Aorta (tissue), 5 donors: ENCODE measurements at regions of chr4 and their contacts with region 1.

Region 1: DNA sequence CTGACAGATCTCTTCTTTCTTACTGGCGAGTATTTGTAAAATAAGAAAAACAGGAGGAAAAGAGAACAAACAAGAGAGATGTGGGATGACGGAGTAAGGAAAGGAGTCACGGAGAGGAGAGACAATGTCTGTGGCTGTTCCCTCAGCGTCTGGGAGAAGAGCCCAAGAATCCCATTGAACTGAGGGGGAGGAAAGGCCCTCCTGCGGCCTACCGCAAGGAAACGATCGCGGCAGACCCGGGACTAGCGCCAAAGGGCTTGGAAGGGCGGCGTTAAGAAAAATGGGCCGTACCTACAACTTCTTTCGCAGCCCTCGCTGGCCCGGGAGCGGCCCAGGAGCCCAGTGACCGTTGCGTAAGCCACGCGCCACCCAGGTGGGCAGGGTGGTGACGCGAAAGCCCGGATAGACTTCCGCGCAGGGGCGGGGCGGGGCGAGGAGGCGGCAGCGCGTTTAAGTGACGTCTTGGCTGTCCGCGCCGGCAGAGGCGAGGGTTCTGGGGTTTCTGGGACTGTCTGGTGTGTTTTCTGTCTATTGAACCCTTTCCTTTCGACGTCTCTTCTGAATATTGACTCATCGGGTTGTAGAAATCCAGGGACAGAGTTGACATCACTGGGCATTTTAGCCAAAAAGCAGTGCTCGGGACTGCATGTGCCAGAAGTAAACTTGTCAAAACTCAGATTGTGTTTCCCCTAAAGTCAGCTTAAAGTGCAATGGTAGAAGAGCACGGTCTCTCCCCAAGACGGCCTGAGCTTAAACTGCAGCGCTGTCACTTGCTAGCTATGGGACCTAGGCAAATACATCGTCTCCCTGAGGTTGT is at the start of gene SLC9B1:
- DNase-seq: peak; percentile 97 to 99
- ATAC-seq: peak; percentile 99
- H3K4me3 ChIP-seq: peak within 1 kb of the TSS; percentile 30 to 86
- H3K27ac ChIP-seq: peak within 1 kb of the TSS; percentile 84 to 98
- H3K4me1 ChIP-seq: no peaks in the 10 kb centered on the region
- H3K27me3 ChIP-seq: no peaks in the 10 kb centered on the region
- total RNA-seq, gene SLC9B1: 1.6 TPM

Region 2: DNA sequence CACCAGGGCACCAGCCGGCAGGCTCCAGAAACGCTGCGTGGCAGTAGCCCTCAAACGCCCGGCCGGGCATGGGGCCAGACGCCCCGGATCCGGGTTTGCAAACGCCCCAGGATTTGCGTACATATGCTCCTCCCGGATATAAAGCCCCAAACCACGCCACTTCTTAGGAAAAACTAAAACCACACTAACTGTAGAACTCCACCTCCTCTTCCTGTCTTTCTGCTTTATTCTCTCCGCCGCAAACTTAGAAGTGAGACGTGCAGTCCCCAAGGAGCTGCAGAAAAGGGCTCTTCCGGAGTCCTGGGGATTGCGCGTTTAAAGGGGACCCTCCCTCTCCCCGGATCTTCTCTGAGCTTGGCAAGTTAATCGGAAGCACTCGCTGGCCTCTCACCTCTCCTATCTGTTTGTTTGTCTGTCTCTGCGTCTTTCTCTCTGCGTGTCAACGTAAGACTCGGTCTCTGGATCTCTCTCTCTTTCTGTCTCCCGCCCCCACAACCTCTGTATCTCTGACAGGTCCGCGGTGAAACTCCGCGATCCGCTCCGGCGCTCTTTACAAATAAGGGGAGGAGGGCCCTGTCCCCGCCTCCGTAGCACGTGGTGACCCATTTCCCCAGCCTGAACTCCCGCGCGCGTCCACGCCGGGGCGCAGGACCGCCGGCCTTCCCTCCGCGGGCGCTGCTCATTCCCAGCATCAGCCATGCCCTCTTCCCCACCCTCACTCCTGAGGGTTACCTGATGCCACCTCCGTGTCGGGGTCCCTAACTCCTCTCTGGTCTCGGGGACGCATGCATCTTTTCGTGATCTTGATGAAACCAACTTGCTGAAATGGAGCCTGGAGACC is 674.3 kb before region 1 on chr4 and contains the start of gene SLC39A8:
- intact Hi-C with region 1: loop called in 1 of 2 experiments (anchors 10 kb)
- DNase-seq: peak; percentile 92 to 95
- ATAC-seq: peak; percentile 96
- H3K4me3 ChIP-seq: peak within 1 kb of the TSS; percentile 68 to 88
- H3K27ac ChIP-seq: no peak within 1 kb of the TSS
- H3K4me1 ChIP-seq: no peaks in the 10 kb centered on the region
- H3K27me3 ChIP-seq: no peaks in the 10 kb centered on the region
- total RNA-seq, gene SLC39A8: 16.5 to 31.3 TPM

Region 3: GRCh38 chr4:102500696-102501446 is 518.6 kb before region 1 on chr4 and contains the start of gene NFKB1:
- intact Hi-C with region 1: loop called in 1 of 2 experiments (anchors 5 kb)
- DNase-seq: peak; percentile 86
- ATAC-seq: peak; percentile 67
- H3K4me3 ChIP-seq: peak within 1 kb of the TSS; percentile 85 to 90
- H3K27ac ChIP-seq: peak within 1 kb of the TSS; percentile 88 to 97
- H3K4me1 ChIP-seq: peaks cover 3 to 6% of the 10 kb centered on the region in 2 donors
- H3K27me3 ChIP-seq: peaks cover 0 to 2% of the 10 kb centered on the region in 2 donors
- total RNA-seq, gene NFKB1: 39.8 to 48.4 TPM

Region 4: DNA sequence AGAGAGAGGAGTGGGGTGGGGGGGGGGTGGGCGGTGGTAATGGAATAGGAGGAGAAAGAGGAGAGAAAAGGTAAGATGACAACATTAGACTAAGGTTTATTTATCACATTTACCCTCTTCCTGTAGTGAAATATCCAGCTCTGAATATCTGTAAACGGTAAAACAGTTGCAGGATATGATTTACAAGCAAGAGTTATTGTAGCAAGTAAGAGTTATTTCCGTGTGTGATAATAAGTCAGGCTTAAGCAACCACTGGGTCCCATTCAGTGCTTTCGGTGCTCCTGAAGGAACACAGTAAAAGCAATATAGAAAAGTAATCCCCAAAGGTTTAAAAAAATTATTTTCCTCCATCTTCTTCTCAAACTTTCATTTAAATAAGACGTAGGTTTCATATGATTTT is 362.3 kb before region 1 on chr4:
- intact Hi-C with region 1: no loop called
- DNase-seq: no peak
- ATAC-seq: no peak
- H3K4me3 ChIP-seq: no peak overlapping the region
- H3K27ac ChIP-seq: no peak overlapping the region
- H3K4me1 ChIP-seq: no peaks in the 10 kb centered on the region
- H3K27me3 ChIP-seq: no peaks in the 10 kb centered on the region

Region 5: DNA sequence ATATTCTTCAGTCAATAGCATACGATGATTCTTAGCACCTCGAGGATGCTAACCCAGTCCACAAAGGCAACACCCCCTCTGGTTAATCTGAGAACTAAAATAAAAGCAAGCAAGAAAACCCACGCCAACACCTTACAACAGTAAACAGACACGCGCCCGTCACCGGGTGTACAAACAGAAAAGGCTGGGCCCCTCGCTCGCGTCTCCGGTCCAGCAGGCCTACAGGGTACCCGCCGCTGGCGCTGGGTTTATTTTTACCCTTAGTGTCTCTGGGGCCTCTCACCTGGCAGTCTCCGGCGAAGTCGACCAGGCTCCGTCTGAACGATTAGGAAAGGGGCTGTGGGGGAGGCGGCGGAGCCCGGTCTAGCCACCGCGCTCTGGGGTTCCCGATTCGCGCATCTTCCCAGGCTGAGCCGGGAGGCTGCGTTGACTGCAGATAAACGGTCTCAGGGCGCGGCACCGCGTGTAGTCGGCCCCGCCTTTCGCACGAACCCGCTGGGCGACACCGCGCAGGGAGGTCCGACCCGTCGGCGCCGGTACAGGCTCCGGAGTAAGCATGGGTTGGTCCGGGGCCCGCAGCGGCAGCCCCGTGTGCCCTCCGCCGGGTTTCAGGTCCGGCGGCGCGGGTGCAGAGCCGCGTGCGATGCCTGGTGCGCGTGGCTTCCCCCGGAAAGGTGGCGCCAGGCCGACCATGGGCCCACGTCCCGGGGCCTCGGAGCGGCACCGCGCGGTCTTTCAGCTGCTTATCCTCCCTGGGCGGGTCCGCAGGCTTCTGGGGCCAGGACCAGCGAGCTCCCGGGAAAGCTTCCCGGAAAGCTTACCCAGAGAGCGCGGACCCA is 56.6 kb after region 1 on chr4:
- intact Hi-C with region 1: loop called (anchors 5 kb)
- DNase-seq: peak; percentile 82 to 91
- ATAC-seq: peak; percentile 94
- H3K4me3 ChIP-seq: peak overlapping the region; percentile 44 to 73
- H3K27ac ChIP-seq: peak overlapping the region; percentile 1 to 38
- H3K4me1 ChIP-seq: peaks cover 0 to 11% of the 10 kb centered on the region in 2 donors
- H3K27me3 ChIP-seq: no peaks in the 10 kb centered on the region